PC-9 (cell line): ENCODE measurements at regions of chr5 and their contacts with region 1.

Region 1: DNA sequence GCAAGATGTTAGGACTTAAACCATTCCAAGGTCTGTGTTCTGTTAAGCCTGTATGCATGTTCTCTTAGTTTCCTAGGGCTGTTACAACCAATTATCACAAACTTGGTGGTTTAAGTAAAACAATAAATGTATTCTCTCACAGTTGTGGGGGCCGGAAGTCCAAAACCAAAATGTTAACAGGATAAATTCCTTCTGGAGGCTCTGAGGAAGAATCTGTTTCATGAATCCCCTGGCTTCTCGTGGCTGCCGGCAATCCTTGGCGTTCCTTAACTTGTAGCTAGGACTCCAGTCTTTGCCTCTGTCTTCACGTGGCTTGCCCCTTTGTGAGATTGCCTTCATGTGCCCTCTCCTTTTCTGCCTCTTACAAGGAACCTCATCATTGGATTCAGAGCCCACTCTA is 30.4 kb downstream of the FEM1C start:
- DNase-seq: no peak
- H3K4me3 ChIP-seq: no peak overlapping the region
- H3K27ac ChIP-seq: no peak overlapping the region
- H3K4me1 ChIP-seq: no peaks in the 10 kb centered on the region
- H3K27me3 ChIP-seq: no peaks in the 10 kb centered on the region
- CTCF ChIP-seq: no peak

Region 2: GRCh38 chr5:115440782-115441451 is 73.3 kb before region 1 on chr5:
- CTCF ChIA-PET with region 1: no interaction called
- POLR2A ChIA-PET with region 1: no interaction called
- intact Hi-C with region 1: loop called (anchors 2 kb)
- DNase-seq: peak; percentile 45 to 55
- H3K4me3 ChIP-seq: no peak overlapping the region
- H3K27ac ChIP-seq: no peak overlapping the region
- H3K4me1 ChIP-seq: peaks cover 31% of the 10 kb centered on the region
- H3K27me3 ChIP-seq: no peaks in the 10 kb centered on the region
- CTCF ChIP-seq: no peak

Region 3: DNA sequence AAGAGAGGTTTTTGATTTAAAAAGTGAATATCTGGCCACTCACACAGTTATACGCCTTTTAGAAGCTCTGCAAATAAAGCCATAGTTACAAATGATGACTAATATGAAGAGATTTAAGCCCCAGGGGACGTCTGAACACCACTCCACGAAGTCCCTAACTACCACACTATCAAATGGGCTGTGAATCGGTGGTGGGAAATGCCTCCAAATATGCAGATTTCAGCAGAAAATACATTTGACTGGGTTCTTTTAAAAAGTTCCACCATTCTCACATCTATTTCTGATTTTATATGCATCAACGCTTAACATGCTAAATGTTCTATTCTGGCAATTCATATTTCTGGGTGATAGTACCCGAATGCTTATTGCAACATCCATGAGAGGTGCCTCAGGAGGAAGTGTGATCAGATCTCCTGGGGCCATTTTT is 65.5 kb after region 1 on chr5:
- CTCF ChIA-PET with region 1: interaction called, 16 read pairs
- POLR2A ChIA-PET with region 1: no interaction called
- intact Hi-C with region 1: no loop called
- DNase-seq: no peak
- H3K4me3 ChIP-seq: no peak overlapping the region
- H3K27ac ChIP-seq: no peak overlapping the region
- H3K4me1 ChIP-seq: peaks cover 17% of the 10 kb centered on the region; the same call in 1 of the 2 replicates
- H3K27me3 ChIP-seq: no peaks in the 10 kb centered on the region
- CTCF ChIP-seq: no peak

Region 4: GRCh38 chr5:116441223-116441622 is 927.0 kb after region 1 on chr5:
- CTCF ChIA-PET with region 1: no interaction called
- POLR2A ChIA-PET with region 1: no interaction called
- intact Hi-C with region 1: no loop called
- DNase-seq: no peak
- H3K4me3 ChIP-seq: no peak overlapping the region
- H3K27ac ChIP-seq: no peak overlapping the region
- H3K4me1 ChIP-seq: no peaks in the 10 kb centered on the region
- H3K27me3 ChIP-seq: peaks cover 9% of the 10 kb centered on the region; the same call in 1 of the 2 replicates
- CTCF ChIP-seq: no peak